HEK293 (cell line): ENCODE measurements at regions of chr3 and their contacts with region 1.

Region 1: DNA sequence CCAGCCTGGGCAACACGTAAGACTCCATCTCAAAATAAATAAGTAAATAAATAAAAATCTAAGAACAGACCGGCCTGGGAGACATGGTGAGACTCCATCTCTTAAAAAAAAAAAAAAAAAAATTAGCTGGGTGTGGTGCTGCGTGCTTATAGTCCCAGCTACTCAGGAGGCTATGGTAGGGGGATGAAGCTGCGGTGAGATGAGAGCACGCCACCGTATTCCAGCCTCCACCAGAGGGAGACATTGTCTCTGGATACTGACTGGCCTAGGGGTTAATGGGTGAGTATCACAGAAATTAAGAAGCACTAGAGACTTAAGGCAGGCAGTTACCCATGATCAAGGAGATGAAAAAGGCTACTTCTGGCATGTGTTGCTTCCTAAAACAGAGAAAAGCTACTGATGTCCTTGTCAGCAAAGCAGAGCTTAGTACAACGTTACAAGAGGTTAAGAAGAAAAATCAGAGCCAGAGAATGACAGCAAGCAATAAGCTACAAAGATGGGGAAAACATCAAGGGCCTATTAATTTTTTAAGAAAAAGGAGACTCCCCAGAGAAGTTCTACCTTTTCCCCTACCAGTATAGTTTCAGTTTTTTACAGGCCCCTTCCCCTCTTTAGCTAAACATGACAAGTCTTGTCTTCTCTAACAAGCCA is 8.6 kb downstream of the TFRC start:
- H3K4me3 ChIP-seq: no peak overlapping the region
- H3K27ac ChIP-seq: no peak overlapping the region
- H3K4me1 ChIP-seq: no peaks in the 10 kb centered on the region
- CTCF ChIP-seq: no peak

Region 2: GRCh38 chr3:196055683-196056270 is 17.5 kb before region 1 on chr3:
- CTCF ChIA-PET with region 1: interaction called, 16 read pairs
- POLR2A ChIA-PET with region 1: no interaction called
- H3K4me3 ChIP-seq: no peak overlapping the region
- H3K27ac ChIP-seq: no peak overlapping the region
- H3K4me1 ChIP-seq: no peaks in the 10 kb centered on the region
- CTCF ChIP-seq: no peak

Region 3: GRCh38 chr3:196136026-196136984 is 63.0 kb after region 1 on chr3:
- CTCF ChIA-PET with region 1: no interaction called
- POLR2A ChIA-PET with region 1: no interaction called
- H3K4me3 ChIP-seq: no peak overlapping the region
- H3K27ac ChIP-seq: no peak overlapping the region
- H3K4me1 ChIP-seq: no peaks in the 10 kb centered on the region
- CTCF ChIP-seq: no peak

Region 4: DNA sequence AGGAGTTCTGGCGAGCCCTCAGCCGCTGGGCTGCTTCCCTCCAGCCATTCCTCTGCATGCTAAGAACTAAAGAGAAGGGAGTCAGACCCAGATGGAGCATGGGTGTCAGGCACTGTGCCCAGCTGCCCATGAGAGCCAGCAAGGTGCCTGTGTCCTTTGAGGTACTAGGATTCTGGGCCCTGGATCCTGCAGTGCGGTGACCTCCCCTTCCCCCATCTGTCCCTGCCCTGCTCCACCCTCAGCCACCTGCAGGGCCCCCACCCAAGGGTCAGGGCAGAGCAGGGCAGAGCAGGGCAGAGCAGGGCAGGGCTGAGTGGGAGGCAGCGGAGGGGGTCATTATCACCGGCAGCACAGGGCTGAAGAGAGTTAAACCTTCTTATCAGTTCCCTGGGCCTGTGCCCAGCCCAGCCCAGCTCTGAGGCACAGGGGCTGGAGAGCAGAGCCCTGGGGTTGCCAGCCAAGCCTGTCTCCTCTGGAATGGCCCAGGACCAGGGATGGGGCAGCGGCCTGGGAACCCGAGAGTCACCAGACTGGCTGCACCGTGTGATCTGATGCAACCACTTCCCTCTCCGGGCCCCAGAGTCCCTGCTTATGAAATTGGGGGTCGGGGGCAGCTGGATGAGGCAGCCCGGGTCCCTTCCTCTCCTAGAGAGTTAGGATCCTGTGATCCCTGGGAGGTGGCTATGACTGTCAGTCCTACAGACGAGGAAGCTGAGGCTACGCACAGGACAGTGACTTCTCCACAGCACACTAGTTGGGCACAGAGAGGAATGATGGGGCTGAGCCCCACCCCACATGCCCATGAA is 120.6 kb after region 1 on chr3:
- CTCF ChIA-PET with region 1: interaction called, 60 read pairs
- POLR2A ChIA-PET with region 1: interaction called, 3 read pairs
- H3K4me3 ChIP-seq: no peak overlapping the region
- H3K27ac ChIP-seq: no peak overlapping the region
- H3K4me1 ChIP-seq: no peaks in the 10 kb centered on the region
- CTCF ChIP-seq: no peak